ENCODE measurements at regions of chr11 and their contacts with region 1.

Region 1: DNA sequence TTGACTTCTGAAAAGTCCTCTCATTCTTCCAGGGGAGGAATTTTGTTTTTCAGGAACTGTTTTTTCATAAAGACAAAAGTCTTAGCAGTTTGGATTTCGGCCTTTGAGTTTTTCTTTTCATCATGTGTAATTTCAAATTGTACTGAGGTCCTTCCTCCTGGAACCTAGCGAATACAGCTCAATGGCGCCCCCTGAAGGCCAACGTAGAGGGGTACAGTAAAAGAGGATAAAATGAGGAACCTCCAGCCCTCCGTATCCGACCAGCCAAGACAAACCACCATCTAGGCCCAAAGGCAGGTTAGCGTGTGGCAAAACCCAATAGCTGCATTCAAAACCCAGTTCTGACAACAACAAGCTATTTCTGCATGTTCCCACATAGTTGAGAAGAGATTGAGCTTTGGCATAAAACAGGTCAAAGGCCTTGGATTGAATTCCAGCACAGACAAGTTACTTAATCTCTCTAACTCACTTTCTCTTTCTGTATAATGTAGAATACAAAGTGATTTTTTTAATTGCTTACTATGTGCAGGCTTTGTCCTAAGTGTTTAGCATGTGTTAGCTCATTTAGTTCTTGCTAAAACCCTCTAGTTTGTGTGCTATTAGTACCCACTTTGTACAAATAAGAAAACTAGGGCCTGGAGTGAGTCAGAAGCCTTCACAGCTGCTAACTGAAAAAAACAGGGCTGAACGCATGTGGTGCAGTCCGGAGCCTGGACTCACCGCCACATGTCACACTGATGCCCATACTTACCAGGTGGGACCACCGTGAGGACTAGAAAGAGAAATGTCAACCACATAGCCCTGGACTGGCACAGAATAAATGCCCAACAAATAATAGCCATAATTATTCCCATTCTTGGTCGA is 43.2 kb upstream of the ETS1 start:
- DNase-seq: peak; percentile 95
- ATAC-seq: peak; percentile 78
- H3K4me3 Mint-ChIP-seq: peak overlapping the region; percentile 72
- H3K27ac Mint-ChIP-seq: peak overlapping the region; percentile 84
- H3K4me1 Mint-ChIP-seq: peaks cover 69% of the 10 kb centered on the region
- H3K27me3 Mint-ChIP-seq: peaks cover under 1% of the 10 kb centered on the region

Region 2: GRCh38 chr11:128157423-128158298 is 472.9 kb before region 1 on chr11:
- CTCF ChIA-PET with region 1: interaction called, 120 read pairs
- POLR2A ChIA-PET with region 1: no interaction called
- DNase-seq: peak; percentile 79
- ATAC-seq: peak; percentile 93
- H3K4me3 Mint-ChIP-seq: peak overlapping the region; percentile 68
- H3K27ac Mint-ChIP-seq: peak overlapping the region; percentile 83
- H3K4me1 Mint-ChIP-seq: peaks cover 13% of the 10 kb centered on the region
- H3K27me3 Mint-ChIP-seq: peaks cover 12% of the 10 kb centered on the region

Region 3: GRCh38 chr11:128195057-128195751 is 435.4 kb before region 1 on chr11:
- CTCF ChIA-PET with region 1: interaction called, 31 read pairs
- POLR2A ChIA-PET with region 1: interaction called, 5 read pairs
- DNase-seq: peak; percentile 73
- ATAC-seq: peak; percentile 80
- H3K4me3 Mint-ChIP-seq: peak overlapping the region; percentile 34
- H3K27ac Mint-ChIP-seq: peak overlapping the region; percentile 64
- H3K4me1 Mint-ChIP-seq: peaks cover 38% of the 10 kb centered on the region
- H3K27me3 Mint-ChIP-seq: no peaks in the 10 kb centered on the region

Region 4: DNA sequence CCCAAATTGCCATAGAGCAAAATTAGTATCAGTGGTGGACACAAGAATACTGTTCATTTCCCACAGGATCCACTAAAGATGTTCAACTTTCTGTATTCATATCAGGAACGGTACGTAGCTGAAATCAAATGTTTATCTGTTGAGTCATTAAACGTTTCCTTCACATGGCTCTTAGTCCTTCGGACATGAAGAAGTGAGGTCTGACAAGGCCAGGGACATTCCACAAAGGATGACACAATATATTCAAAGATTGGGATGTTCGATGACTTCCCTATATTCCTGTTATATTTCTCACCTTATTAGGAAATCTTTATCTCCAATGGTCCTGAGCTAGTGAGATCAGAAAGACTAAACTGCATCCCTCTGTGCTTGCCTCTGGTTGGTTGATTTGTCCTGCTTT is 172.3 kb before region 1 on chr11:
- CTCF ChIA-PET with region 1: interaction called, 10 read pairs
- POLR2A ChIA-PET with region 1: no interaction called
- DNase-seq: no peak
- ATAC-seq: no peak
- H3K4me3 Mint-ChIP-seq: no peak overlapping the region
- H3K27ac Mint-ChIP-seq: peak overlapping the region; percentile 2
- H3K4me1 Mint-ChIP-seq: peaks cover 60% of the 10 kb centered on the region
- H3K27me3 Mint-ChIP-seq: no peaks in the 10 kb centered on the region

Region 5: GRCh38 chr11:128488471-128488870 is 142.1 kb before region 1 on chr11:
- CTCF ChIA-PET with region 1: interaction called, 43 read pairs
- POLR2A ChIA-PET with region 1: interaction called, 5 read pairs
- DNase-seq: no peak
- ATAC-seq: peak; percentile 18
- H3K4me3 Mint-ChIP-seq: peak overlapping the region; percentile 26
- H3K27ac Mint-ChIP-seq: peak overlapping the region; percentile 87
- H3K4me1 Mint-ChIP-seq: peaks cover 95% of the 10 kb centered on the region
- H3K27me3 Mint-ChIP-seq: no peaks in the 10 kb centered on the region

Region 6: GRCh38 chr11:128552783-128553661 is 77.6 kb before region 1 on chr11:
- CTCF ChIA-PET with region 1: interaction called, 27 read pairs
- POLR2A ChIA-PET with region 1: interaction called, 19 read pairs
- DNase-seq: no peak
- ATAC-seq: no peak
- H3K4me3 Mint-ChIP-seq: no peak overlapping the region
- H3K27ac Mint-ChIP-seq: peak overlapping the region; percentile 62
- H3K4me1 Mint-ChIP-seq: peaks cover 59% of the 10 kb centered on the region
- H3K27me3 Mint-ChIP-seq: no peaks in the 10 kb centered on the region

Region 7: GRCh38 chr11:128848815-128849455 is 218.3 kb after region 1 on chr11:
- CTCF ChIA-PET with region 1: interaction called, 14 read pairs
- POLR2A ChIA-PET with region 1: no interaction called
- DNase-seq: peak; percentile 73
- ATAC-seq: peak; percentile 77
- H3K4me3 Mint-ChIP-seq: no peak overlapping the region
- H3K27ac Mint-ChIP-seq: no peak overlapping the region
- H3K4me1 Mint-ChIP-seq: peaks cover 23% of the 10 kb centered on the region
- H3K27me3 Mint-ChIP-seq: no peaks in the 10 kb centered on the region

Measured in activated CD8-positive, alpha-beta T cell treated with anti-CD3 and anti-CD28 coated beads, Interleukin-2, amount 10 ng/mL, durations not matched to agents 7 days and 5 days (primary cell).